ENCODE measurements at regions of chr7 and their contacts with region 1.

Region 1: GRCh38 chr7:29921404-29922010 is 68.1 kb downstream of the SCRN1 start:
- DNase-seq: peak; percentile 55
- ATAC-seq: peak; percentile 79
- H3K4me3 Mint-ChIP-seq: no peak overlapping the region
- H3K27ac Mint-ChIP-seq: no peak overlapping the region
- H3K4me1 Mint-ChIP-seq: peaks cover 6% of the 10 kb centered on the region
- H3K27me3 Mint-ChIP-seq: no peaks in the 10 kb centered on the region

Region 2: GRCh38 chr7:29401769-29402168 is 519.7 kb before region 1 on chr7:
- CTCF ChIA-PET with region 1: no interaction called
- POLR2A ChIA-PET with region 1: no interaction called
- intact Hi-C with region 1: no loop called
- DNase-seq: no peak
- ATAC-seq: no peak
- H3K4me3 Mint-ChIP-seq: no peak overlapping the region
- H3K27ac Mint-ChIP-seq: no peak overlapping the region
- H3K4me1 Mint-ChIP-seq: no peaks in the 10 kb centered on the region
- H3K27me3 Mint-ChIP-seq: no peaks in the 10 kb centered on the region

Region 3: GRCh38 chr7:29639881-29640595 is 281.5 kb before region 1 on chr7:
- CTCF ChIA-PET with region 1: interaction called, 4 read pairs
- POLR2A ChIA-PET with region 1: no interaction called
- intact Hi-C with region 1: loop called (anchors 2 to 5 kb)
- DNase-seq: no peak
- ATAC-seq: no peak
- H3K4me3 Mint-ChIP-seq: no peak overlapping the region
- H3K27ac Mint-ChIP-seq: no peak overlapping the region
- H3K4me1 Mint-ChIP-seq: no peaks in the 10 kb centered on the region
- H3K27me3 Mint-ChIP-seq: no peaks in the 10 kb centered on the region

Region 4: GRCh38 chr7:29748286-29749108 is 173.0 kb before region 1 on chr7:
- CTCF ChIA-PET with region 1: interaction called, 13 read pairs
- POLR2A ChIA-PET with region 1: no interaction called
- intact Hi-C with region 1: loop called (anchors 1 to 2 kb)
- DNase-seq: no peak
- ATAC-seq: no peak
- H3K4me3 Mint-ChIP-seq: no peak overlapping the region
- H3K27ac Mint-ChIP-seq: no peak overlapping the region
- H3K4me1 Mint-ChIP-seq: no peaks in the 10 kb centered on the region
- H3K27me3 Mint-ChIP-seq: no peaks in the 10 kb centered on the region

Region 5: DNA sequence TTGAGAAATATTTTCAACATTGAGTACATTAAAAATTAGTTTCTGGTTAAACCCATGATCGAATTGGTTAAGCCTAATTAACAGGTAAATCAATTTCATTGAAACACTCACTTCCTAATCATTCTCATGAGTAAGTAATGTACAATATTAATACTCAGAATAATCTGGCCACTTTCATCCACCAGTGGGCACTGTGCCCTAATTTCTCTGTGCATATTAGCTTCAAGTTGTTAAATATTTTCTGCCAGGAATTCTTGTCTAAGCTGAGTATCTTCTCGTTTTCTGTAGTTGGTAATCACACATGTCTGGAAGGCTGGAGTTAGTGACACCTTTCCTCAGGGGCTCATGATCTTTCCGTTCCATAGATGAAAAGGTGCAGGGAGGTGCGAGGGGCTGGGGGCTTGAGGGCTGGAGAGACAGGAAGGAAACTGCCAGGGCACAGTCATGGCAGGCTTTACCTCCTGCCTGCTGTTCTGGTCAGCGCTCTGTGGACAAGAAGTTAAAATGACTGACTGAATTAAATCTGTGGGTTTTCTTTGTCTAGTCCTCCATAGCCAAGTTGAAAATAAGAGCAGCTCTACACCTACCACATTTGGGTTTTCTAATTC is 43.3 kb before region 1 on chr7:
- CTCF ChIA-PET with region 1: interaction called, 14 read pairs
- POLR2A ChIA-PET with region 1: no interaction called
- intact Hi-C with region 1: loop called in 1 of 2 experiments (anchors 1 kb)
- DNase-seq: peak; percentile 38
- ATAC-seq: no peak
- H3K4me3 Mint-ChIP-seq: no peak overlapping the region
- H3K27ac Mint-ChIP-seq: no peak overlapping the region
- H3K4me1 Mint-ChIP-seq: peaks cover 5% of the 10 kb centered on the region
- H3K27me3 Mint-ChIP-seq: peaks cover 5% of the 10 kb centered on the region

Region 6: DNA sequence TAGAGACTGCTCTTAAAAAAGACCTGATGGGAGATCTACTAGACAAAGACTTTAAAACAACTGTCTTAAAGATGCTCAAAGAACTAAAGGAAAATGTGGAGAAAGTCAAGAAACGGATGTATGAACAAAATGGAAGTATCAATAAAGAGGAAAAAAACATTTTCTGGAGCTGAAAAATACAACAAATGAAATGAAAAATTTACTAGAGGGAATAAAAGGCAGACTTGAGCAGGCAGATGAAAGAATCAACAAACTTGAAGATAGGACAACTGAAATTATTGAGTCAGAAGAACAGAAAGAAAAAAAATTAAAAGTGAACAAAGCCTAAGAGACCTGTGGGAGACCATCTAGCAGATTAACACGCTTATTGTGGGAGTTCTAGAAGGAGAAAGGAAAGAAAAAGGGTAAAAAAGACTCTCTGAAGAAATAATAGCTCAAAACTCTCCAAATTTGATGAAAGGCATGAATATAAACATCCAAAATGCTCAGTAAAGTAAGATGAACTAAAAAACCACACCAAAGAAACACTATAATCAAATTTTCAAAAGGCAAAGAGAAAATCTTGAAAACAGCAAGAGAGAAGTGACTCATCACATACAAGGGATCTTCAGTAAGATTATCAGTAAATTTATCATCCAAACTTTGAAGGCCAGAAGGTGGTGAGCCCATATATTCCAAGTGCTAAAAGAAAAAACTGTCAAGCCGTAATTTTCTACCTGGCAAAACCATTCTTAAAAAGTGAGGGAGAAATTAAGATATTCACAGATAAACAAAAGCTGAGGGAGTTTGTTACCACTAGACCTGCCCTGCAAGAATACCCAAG is 15.1 kb before region 1 on chr7:
- CTCF ChIA-PET with region 1: interaction called, 16 read pairs
- POLR2A ChIA-PET with region 1: interaction called, 3 read pairs
- intact Hi-C with region 1: no loop called
- DNase-seq: no peak
- ATAC-seq: no peak
- H3K4me3 Mint-ChIP-seq: no peak overlapping the region
- H3K27ac Mint-ChIP-seq: no peak overlapping the region
- H3K4me1 Mint-ChIP-seq: no peaks in the 10 kb centered on the region
- H3K27me3 Mint-ChIP-seq: peaks cover 3% of the 10 kb centered on the region

Region 7: DNA sequence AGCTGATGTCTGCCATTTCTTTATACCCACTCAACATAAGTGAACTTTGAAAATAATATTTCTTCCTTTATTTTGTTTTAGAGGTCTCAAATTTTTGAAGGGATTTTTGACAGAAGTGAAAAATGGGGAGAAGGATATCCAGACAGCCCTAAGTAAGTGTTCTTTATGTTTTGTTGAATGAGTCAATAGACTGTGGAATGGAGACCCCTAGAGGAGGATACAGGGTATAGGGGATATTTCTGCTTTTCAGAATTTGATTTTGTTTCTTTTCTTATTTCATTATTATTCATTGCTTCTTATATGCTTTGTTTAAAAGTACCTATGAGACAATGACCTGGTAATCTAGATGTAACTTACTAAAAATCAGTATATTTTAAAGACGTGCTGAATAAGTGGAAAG is 141.1 kb after region 1 on chr7:
- CTCF ChIA-PET with region 1: interaction called, 4 read pairs
- POLR2A ChIA-PET with region 1: no interaction called
- intact Hi-C with region 1: loop called in 1 of 2 experiments (anchors 5 kb)
- DNase-seq: no peak
- ATAC-seq: peak; percentile 53
- H3K4me3 Mint-ChIP-seq: no peak overlapping the region
- H3K27ac Mint-ChIP-seq: no peak overlapping the region
- H3K4me1 Mint-ChIP-seq: peaks cover 5% of the 10 kb centered on the region
- H3K27me3 Mint-ChIP-seq: no peaks in the 10 kb centered on the region

Measured in activated CD4-positive, alpha-beta T cell treated with anti-CD3 and anti-CD28 coated beads for 36 hours (primary cell).